ENCODE measurements at regions of chr13 and their contacts with region 1.

Region 1: DNA sequence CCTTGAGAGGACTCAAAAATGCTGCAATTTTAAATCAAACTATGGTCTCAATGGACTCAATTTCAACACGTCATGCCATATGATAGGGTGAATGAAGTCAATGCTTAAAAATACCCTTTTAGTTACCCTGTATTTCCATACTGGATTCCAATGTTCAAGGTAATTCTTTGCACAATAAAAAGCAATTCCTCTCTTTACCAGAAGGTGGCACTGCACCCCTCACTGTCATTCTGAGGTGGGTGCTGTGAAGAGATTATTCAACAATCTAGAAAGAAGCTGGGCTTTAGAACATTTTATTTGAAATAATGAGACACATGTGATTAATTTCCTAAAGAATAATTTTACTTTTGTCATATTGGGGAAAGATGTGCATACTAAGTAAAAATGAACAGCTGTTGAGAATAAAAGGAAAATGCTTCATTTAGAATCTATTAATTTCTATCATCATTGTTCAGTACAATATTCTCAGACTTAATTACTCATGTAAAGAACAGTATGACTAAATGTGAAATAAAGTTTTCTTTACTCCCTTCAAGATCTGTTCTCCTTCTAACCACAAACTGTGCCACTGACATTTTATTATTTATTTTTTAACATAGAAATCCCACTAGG is 789.1 kb downstream of the GPC5 start:
- DNase-seq: peak; percentile 7
- H3K4me3 ChIP-seq: no peak overlapping the region
- H3K27ac ChIP-seq: no peak overlapping the region
- H3K4me1 ChIP-seq: no peaks in the 10 kb centered on the region
- H3K27me3 ChIP-seq: no peaks in the 10 kb centered on the region
- CTCF ChIP-seq: peak; percentile 83 to 89

Region 2: GRCh38 chr13:92390217-92390616 is 202.7 kb after region 1 on chr13:
- CTCF ChIA-PET with region 1: no interaction called
- dilution Hi-C with region 1: no loop called
- in situ Hi-C with region 1: no loop called
- intact Hi-C with region 1: no loop called
- DNase-seq: no peak
- H3K4me3 ChIP-seq: no peak overlapping the region
- H3K27ac ChIP-seq: no peak overlapping the region
- H3K4me1 ChIP-seq: no peaks in the 10 kb centered on the region
- H3K27me3 ChIP-seq: no peaks in the 10 kb centered on the region
- CTCF ChIP-seq: no peak

Region 3: GRCh38 chr13:92530364-92530763 is 342.9 kb after region 1 on chr13:
- CTCF ChIA-PET with region 1: interaction called, 10 read pairs
- dilution Hi-C with region 1: no loop called
- in situ Hi-C with region 1: no loop called
- intact Hi-C with region 1: loop called (anchors 1 kb)
- DNase-seq: no peak
- H3K4me3 ChIP-seq: no peak overlapping the region
- H3K27ac ChIP-seq: no peak overlapping the region
- H3K4me1 ChIP-seq: no peaks in the 10 kb centered on the region
- H3K27me3 ChIP-seq: no peaks in the 10 kb centered on the region
- CTCF ChIP-seq: peak in 1 of 2 donors; percentile 10

Region 4: GRCh38 chr13:92864584-92865284 is 677.2 kb after region 1 on chr13:
- CTCF ChIA-PET with region 1: no interaction called
- dilution Hi-C with region 1: no loop called
- in situ Hi-C with region 1: no loop called
- intact Hi-C with region 1: loop called (anchors 5 kb)
- DNase-seq: no peak
- H3K4me3 ChIP-seq: no peak overlapping the region
- H3K27ac ChIP-seq: no peak overlapping the region
- H3K4me1 ChIP-seq: no peaks in the 10 kb centered on the region
- H3K27me3 ChIP-seq: no peaks in the 10 kb centered on the region
- CTCF ChIP-seq: no peak